ENCODE measurements at regions of chr5 and their contacts with region 1.

Region 1: DNA sequence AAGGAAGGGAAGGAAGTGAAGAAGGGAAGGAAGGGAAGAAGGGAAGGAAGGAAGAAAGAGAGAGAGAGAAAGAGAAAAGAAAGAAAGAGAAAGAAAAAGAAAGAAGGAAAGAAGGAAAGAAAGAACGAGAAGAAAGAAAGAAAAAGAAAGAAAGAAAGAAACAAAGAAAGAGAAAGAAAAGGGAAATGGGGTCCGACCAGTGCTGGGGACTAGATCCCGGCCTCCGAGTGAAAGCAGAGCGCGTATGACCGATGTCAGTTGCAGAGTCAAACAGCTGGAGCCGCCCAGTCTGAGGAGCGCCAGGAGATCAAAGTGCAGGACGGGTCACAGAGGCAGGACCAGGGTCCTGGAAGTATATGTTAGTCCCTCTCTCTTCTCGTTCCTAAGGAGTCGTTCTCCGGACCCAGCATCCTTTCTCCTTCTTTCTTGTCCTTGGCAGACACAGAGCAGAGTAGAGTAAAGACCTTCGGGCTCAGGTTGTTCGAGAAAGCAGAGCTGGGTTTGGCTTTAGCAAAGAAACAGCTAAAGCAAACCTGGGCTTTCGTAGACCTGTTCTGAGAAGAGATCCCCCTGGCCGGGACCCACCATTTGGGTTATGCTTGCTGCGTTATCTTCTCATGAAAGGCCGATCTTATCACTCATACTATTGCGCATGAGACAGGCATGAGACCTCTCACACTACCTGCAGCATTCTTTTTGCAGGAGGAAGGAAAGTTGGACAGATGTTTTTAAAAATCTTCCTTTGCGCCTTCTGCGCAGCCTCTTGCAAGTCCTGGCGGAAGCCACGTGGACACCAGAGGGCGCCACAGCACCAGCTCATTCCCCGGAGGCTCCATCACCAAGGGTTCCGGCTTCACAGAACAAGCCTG is 305.2 kb upstream of the MSX2 start:
- DNase-seq: peak; percentile 91
- ATAC-seq: peak; percentile 97
- H3K4me3 ChIP-seq: peak overlapping the region; percentile 2
- H3K27ac ChIP-seq: no peak overlapping the region
- H3K4me1 ChIP-seq: peaks cover 1% of the 10 kb centered on the region; the same call in 1 of the 2 replicates
- H3K27me3 ChIP-seq: no peaks in the 10 kb centered on the region; the same call in 1 of the 2 replicates
- CTCF ChIP-seq: peak; percentile 98
- POLR2A ChIP-seq: peak; percentile 51; the same call in 1 of the 2 replicates
- RAD21 ChIP-seq: peak; percentile 99

Region 2: DNA sequence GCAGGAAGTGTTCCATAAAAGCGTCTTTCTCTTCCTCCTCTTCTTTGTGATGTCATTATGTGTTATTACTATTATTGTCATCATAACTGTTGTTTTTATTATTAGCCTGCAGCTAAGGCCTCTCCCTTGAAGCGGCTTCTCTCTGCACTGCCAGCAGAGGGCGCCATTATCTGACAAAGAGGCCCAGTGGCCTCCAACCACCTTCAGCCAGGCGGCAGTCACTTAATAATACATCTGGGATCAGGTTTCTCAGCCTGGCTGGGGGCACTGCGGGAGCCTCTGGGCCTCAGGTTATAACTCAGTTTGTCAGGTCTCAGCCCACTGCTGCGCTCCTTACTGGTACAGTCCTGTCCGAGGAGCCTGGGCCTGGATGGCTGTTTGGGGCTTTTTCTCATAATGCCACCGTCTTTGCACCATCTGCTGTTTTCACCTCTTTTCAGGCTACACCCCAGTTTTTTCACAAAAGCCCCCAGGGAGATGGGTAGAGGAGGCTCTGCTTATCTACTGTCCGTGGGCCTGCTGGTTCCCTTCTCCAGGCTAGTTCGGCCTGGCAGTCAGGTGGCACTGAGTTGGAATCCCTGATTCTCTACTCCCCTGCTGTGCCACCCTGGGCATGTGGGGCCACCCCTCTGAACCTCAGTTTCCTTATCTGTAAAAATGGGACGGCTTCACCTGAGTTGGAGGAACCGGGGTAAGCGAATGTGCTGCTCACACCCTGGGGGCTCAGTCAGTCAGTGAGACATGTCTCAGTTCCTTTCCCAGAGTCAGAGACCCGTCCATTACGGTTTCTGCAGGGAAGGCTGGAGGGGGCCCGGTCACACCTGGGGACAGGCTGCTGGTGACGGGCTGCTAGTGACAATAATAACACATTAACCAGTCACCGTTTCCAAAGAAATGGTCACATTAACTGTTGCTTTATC is 91.6 kb before region 1 on chr5:
- CTCF ChIA-PET with region 1: interaction called, 3 read pairs
- POLR2A ChIA-PET with region 1: no interaction called
- dilution Hi-C with region 1: no loop called
- in situ Hi-C with region 1: no loop called
- intact Hi-C with region 1: loop called (anchors 1 kb)
- DNase-seq: peak; percentile 69
- ATAC-seq: peak; percentile 85
- H3K4me3 ChIP-seq: no peak overlapping the region
- H3K27ac ChIP-seq: peak overlapping the region; percentile 10; the same call in 1 of the 2 replicates
- H3K4me1 ChIP-seq: peaks cover 4% of the 10 kb centered on the region; the same call in 1 of the 2 replicates
- H3K27me3 ChIP-seq: no peaks in the 10 kb centered on the region; the same call in 1 of the 2 replicates
- CTCF ChIP-seq: peak; percentile 82
- POLR2A ChIP-seq: no peak
- RAD21 ChIP-seq: peak; percentile 73

Region 3: GRCh38 chr5:174724491-174725260 is 305.5 kb after region 1 on chr5 and contains the start of gene MSX2:
- CTCF ChIA-PET with region 1: interaction called, 4 read pairs
- POLR2A ChIA-PET with region 1: no interaction called
- dilution Hi-C with region 1: no loop called
- in situ Hi-C with region 1: loop called (anchors 25 kb)
- intact Hi-C with region 1: loop called (anchors 1 kb)
- DNase-seq: peak; percentile 86
- ATAC-seq: peak; percentile 96
- H3K4me3 ChIP-seq: peak within 1 kb of the TSS; percentile 54
- H3K27ac ChIP-seq: peak within 1 kb of the TSS; percentile 38
- H3K4me1 ChIP-seq: no peaks in the 10 kb centered on the region
- H3K27me3 ChIP-seq: peaks cover 40% of the 10 kb centered on the region
- CTCF ChIP-seq: no peak
- POLR2A ChIP-seq: peak; percentile 59
- RAD21 ChIP-seq: no peak
- total RNA-seq, gene MSX2: 1.9 and 2.2 TPM in 2 replicates

Region 4: DNA sequence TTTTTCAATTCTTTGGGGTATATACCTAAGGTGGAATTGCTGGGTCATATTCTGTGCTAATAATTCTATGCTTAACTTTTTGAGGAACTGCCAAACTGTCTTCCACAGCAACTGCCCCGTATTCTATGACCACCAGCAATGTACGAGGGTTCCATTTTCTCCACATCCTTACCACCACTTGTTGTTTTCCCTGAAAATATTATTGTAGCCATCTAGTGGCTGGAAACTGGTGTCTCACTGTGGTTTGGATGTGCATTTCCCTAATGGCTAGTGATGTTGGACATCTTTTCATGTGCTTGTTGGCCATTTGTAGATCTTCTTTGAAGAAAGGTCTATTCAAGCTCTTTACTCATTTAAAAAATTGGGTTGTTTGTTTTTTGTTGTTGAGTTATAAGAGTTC is 335.9 kb after region 1 on chr5:
- CTCF ChIA-PET with region 1: interaction called, 3 read pairs
- POLR2A ChIA-PET with region 1: interaction called, 3 read pairs
- dilution Hi-C with region 1: no loop called
- in situ Hi-C with region 1: no loop called
- intact Hi-C with region 1: loop called (anchors 1 kb)
- DNase-seq: peak; percentile 22
- ATAC-seq: peak; percentile 42
- H3K4me3 ChIP-seq: no peak overlapping the region
- H3K27ac ChIP-seq: no peak overlapping the region
- H3K4me1 ChIP-seq: no peaks in the 10 kb centered on the region; the same call in 1 of the 2 replicates
- H3K27me3 ChIP-seq: peaks cover 7% of the 10 kb centered on the region
- CTCF ChIP-seq: peak; percentile 48
- POLR2A ChIP-seq: no peak
- RAD21 ChIP-seq: peak; percentile 36

Region 5: DNA sequence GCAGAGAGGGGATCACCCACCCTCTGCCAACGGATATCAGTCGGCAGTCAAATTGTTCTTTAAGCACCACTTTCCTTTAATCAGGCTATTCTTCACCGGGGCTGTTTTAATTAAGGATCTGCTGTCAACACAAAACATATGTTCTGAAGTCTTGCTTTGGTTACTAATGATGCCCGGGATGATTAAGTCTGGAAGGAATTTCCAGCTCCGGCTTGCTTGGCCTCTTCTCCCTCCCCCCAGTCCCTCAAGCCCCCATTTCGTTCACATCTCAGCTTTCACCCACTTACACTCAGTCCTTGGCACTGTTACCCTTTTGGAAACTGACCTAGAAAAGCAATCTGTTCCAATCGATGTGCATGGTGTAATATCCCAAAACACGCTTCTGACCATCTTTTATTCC is 380.0 kb after region 1 on chr5:
- CTCF ChIA-PET with region 1: interaction called, 24 read pairs
- POLR2A ChIA-PET with region 1: no interaction called
- dilution Hi-C with region 1: no loop called
- in situ Hi-C with region 1: loop called (anchors 5 kb)
- intact Hi-C with region 1: no loop called
- DNase-seq: no peak
- ATAC-seq: peak; percentile 73
- H3K4me3 ChIP-seq: no peak overlapping the region
- H3K27ac ChIP-seq: peak overlapping the region; percentile 36; the same call in 1 of the 2 replicates
- H3K4me1 ChIP-seq: peaks cover 5% of the 10 kb centered on the region; the same call in 1 of the 2 replicates
- H3K27me3 ChIP-seq: peaks cover 6% of the 10 kb centered on the region
- CTCF ChIP-seq: no peak
- POLR2A ChIP-seq: no peak
- RAD21 ChIP-seq: no peak

Region 6: DNA sequence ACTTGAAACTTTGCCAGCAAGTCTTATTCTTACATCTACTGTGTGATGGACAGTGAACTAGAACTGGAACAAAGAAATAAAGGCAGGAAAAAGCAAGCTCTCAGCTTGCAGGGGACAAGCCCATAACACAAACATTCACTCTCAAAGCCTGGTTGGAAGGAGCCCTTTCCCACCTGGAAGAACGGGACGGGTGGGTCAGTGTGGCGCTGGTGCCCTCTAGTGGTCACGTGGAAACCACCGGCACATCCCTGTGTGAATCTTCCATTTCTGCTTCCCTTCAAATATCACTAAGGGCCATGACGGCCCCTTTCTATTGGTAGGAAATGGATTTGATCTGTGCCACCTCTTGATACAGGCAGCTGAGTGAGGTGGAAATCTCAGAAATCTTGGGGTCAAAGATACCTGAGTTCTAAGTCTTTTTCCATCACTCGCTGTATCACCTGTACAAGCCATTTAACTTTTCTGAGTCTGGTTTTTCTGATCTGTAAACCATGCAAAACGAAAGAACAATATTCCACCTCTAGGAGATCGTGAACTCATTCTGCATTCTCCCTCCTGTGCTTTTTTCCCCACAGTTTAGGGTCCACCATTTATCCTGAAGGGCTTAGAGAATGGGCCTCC is 516.8 kb after region 1 on chr5:
- CTCF ChIA-PET with region 1: interaction called, 3 read pairs
- POLR2A ChIA-PET with region 1: no interaction called
- dilution Hi-C with region 1: no loop called
- in situ Hi-C with region 1: loop called (anchors 5 kb)
- intact Hi-C with region 1: loop called (anchors 1 kb)
- DNase-seq: peak; percentile 30
- ATAC-seq: peak; percentile 84
- H3K4me3 ChIP-seq: no peak overlapping the region
- H3K27ac ChIP-seq: no peak overlapping the region
- H3K4me1 ChIP-seq: no peaks in the 10 kb centered on the region
- H3K27me3 ChIP-seq: no peaks in the 10 kb centered on the region
- CTCF ChIP-seq: peak; percentile 82
- POLR2A ChIP-seq: no peak
- RAD21 ChIP-seq: peak; percentile 80